Astrocyte of the cerebellum (primary cell): ENCODE measurements at regions of chr12 and their contacts with region 1.

Region 1: DNA sequence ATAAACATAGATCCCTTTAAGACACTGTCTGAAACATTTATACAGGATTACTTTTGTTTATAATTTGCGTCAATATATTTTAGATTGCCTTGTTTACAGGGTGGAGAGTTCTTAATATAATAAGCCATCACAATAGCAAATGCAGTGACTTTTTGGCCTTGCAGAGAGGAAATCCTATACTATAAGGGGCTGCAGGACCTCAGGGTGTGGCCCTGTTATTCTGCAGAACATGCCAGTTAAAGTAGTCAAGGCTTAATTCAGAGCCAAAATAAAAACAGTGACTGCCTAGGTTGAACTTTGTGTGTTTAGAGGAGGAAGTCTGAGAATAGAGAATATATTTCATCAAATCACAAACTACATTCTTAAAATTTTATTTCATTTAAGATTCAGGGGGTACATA is 381.6 kb downstream of the DUSP6 start:
- DNase-seq: no peak
- H3K4me3 ChIP-seq: no peak overlapping the region
- CTCF ChIP-seq: no peak

Region 2: GRCh38 chr12:88820012-88820411 is 150.7 kb before region 1 on chr12:
- in situ Hi-C with region 1: loop called (anchors 10 kb)
- DNase-seq: no peak
- H3K4me3 ChIP-seq: no peak overlapping the region
- CTCF ChIP-seq: no peak